PC-3 (cell line): ENCODE measurements at regions of chr3 and their contacts with region 1.

Region 1: DNA sequence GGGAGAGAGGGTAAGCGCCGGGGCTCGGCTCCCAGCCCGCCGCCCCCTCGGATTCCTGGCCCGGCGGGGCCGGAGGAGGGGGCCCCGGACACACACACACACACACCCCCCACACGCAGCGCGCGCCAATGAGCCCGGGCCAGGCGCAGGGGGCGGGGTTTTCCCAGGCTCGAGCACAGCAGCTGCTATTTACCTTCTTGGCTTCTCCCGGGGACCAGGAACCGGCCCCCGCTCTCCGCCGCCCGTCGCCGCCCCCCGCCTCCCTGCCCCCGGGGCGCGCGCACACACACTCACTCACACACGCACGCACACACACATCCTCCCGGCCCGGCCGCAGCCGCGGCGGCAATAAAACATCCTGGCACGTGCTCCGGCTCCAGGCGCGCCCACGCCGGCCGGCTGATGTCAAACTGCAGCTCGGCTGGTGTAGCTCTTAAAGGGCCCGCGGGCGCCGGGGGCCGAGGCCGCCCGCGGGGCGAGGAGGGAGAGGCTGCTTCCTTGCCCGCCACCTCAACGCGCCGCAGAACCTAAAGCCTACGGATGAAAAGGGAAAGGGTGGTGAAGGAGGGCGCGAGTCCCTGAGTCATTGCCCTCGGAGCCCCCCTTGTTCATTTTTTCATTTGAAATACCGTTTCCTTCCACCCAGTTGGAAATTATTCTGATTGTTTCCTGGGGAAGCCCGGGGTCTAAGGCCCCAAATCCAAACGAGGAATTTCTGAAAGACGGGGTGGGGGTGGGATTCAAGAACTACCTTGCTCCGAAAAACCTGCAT is 1.0 kb upstream of the HES1 start:
- DNase-seq: peak; percentile 97
- ATAC-seq: peak; percentile 37
- H3K4me3 ChIP-seq: peak overlapping the region; percentile 89
- H3K27ac ChIP-seq: peak overlapping the region; percentile 67
- H3K4me1 ChIP-seq: peaks cover 58% of the 10 kb centered on the region
- H3K27me3 ChIP-seq: no peaks in the 10 kb centered on the region
- CTCF ChIP-seq: no peak

Region 2: DNA sequence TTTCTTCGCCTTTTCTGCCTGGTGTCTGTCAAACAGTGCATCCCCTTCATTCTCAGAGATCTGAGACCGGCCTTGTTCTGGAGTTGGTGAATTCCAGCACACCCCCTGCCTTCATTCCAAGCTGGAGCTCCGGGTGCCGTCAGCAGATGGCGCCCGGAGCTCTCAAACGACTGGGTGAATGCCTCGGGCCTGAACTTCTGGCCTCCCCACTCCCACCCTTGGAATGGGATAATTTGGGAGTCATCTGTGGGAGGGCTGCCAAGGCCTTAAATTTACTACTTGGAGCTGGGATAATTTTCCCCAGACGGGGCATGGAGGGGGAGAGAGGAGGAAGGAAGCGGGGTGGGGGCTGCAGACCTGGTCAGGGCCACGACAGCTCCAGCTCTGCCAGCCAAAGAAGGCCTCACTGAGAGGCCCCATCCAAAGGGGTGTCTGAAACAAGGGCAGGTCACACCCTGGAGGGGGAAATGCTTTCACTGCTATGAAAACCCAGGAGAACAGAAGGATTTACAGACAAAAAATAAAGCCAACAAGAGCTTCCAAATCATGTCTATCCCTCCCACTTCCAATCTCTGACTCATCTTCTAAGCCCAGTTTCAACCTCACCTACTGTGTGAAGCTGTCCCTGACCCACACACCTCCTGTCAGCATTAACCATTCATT is 354.0 kb before region 1 on chr3:
- CTCF ChIA-PET with region 1: interaction called, 13 read pairs
- POLR2A ChIA-PET with region 1: interaction called, 18 read pairs
- intact Hi-C with region 1: loop called (anchors 1 kb)
- DNase-seq: peak; percentile 95
- ATAC-seq: peak; percentile 84
- H3K4me3 ChIP-seq: no peak overlapping the region
- H3K27ac ChIP-seq: peak overlapping the region; percentile 78
- H3K4me1 ChIP-seq: peaks cover 47% of the 10 kb centered on the region
- H3K27me3 ChIP-seq: no peaks in the 10 kb centered on the region
- CTCF ChIP-seq: peak; percentile 97

Region 3: DNA sequence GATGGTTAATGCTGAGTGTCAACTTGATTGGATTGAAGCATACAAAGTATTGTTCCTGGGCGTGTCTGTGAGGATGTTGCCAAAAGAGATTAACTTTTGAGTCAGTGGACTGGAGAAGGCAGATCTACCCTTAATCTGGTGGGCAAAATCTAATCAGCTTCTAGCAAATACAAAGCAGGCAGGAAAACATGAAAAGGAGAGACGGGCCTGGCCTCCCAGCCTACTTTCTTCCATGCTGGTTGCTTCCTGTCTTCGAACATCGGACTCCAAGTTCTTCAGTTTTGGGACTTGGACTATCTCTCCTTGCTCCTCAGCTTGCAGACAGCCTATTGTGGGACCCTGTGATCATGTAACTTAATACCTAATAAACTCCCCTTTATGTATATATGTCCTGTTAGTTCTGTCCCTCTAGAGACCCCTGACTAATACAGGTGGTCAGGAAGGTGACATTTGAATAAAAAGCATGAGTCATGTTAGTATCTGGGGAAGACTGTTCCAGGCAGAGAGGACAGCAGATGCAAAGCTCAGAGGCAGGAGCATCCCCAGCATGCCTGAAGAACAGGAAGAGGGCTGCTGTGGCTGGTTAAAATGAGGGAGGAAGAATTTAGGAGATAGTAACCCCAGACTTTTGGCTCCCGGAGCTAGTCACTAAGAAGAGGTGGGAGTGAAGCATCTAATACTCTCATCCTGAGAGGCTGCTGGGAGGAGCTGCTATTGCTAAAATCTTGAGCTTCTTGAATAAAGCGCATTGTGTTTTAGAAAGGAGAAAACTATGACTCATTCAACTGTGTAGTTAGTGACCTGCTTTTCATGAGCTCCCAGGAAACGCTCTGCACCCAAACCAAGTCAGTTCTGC is 206.4 kb before region 1 on chr3:
- CTCF ChIA-PET with region 1: no interaction called
- POLR2A ChIA-PET with region 1: interaction called, 21 read pairs
- intact Hi-C with region 1: loop called (anchors 2 kb)
- DNase-seq: peak; percentile 87
- ATAC-seq: peak; percentile 94
- H3K4me3 ChIP-seq: peak overlapping the region; percentile 6; the same call in 1 of the 2 replicates
- H3K27ac ChIP-seq: peak overlapping the region; percentile 88
- H3K4me1 ChIP-seq: peaks cover 28% of the 10 kb centered on the region
- H3K27me3 ChIP-seq: no peaks in the 10 kb centered on the region
- CTCF ChIP-seq: no peak

Region 4: DNA sequence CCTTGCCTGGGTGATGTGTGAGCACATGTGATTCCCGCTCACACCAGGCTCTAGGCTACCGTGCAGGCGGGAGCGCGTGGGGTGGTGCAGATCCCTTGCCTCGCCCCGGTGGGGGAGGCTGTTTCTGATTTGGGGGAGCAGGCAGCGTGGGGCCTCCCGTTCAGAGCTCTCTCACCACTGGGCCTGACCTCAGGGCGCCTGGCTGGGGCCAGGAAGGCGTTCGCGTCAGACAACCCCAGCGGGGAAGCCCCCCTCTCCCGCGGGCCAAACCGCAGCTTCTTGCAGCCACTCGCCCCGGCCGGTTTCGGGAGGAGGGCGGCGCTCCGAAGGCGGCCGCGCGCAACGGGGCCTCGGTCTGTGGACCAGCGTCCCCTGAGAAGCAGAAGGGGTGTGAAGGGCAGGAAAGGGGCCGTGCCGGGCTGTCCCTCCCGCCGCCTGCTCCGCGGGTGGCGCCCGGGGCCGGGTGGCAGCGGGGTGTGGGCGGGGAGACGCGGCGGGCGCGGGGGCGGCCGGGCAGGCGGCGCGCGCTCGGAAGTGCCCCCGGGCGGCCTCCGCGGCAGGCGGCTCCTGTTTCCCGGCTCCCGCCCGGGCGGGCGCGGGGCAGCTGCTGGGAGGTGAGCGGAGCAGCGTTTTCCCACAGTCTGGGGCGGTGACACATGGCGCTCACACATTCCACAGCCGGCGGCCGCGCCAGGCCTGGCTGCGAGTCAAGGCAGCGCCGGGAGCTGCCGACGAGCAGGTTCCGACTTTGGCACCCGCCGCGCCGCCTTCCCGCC is 64.1 kb before region 1 on chr3:
- CTCF ChIA-PET with region 1: interaction called, 3 read pairs
- POLR2A ChIA-PET with region 1: interaction called, 8 read pairs
- intact Hi-C with region 1: loop called (anchors 2 kb)
- DNase-seq: peak; percentile 93
- ATAC-seq: peak; percentile 80
- H3K4me3 ChIP-seq: peak overlapping the region; percentile 60
- H3K27ac ChIP-seq: no peak overlapping the region
- H3K4me1 ChIP-seq: peaks cover 35% of the 10 kb centered on the region
- H3K27me3 ChIP-seq: no peaks in the 10 kb centered on the region
- CTCF ChIP-seq: no peak

Region 5: DNA sequence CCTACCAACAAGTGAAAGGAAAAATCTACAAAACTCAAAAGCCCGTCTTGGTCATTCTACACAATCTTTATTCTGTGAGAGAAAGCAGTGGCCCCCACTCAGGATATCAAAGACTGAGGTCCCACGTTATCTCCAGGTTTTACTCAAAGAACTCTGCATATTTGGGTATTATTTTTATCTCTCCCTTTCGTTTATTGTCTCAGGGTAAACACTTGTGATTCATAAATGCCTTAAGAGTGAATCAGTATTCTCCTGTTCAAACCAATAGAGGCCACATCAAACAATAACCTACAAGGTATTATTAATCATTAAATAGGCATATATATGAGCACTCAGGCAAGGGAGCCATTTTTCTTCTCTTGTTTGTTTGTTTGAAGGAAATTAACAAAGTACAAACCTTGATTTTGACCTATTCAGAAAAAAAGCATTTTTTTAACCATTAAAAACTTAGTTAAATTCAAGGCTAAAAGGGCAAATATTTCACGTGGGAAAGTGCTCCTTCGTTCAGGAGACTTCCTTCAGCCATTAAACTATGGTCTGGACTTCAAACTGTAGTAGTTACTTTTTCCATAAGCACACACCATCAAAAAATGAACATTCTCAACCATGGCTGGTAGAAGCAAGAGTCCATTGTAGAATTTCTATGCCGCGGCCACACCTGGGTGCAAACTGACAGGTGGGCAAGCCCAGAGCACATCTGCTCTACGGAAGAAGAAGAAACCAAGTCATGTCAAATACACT is 12.9 kb before region 1 on chr3:
- CTCF ChIA-PET with region 1: no interaction called
- POLR2A ChIA-PET with region 1: interaction called, 6 read pairs
- intact Hi-C with region 1: loop called (anchors 1 kb)
- DNase-seq: peak; percentile 88
- ATAC-seq: peak; percentile 95
- H3K4me3 ChIP-seq: peak overlapping the region; percentile 5; the same call in 1 of the 2 replicates
- H3K27ac ChIP-seq: peak overlapping the region; percentile 46
- H3K4me1 ChIP-seq: peaks cover 38% of the 10 kb centered on the region
- H3K27me3 ChIP-seq: no peaks in the 10 kb centered on the region
- CTCF ChIP-seq: no peak